Mammary epithelial cell (primary cell): ENCODE measurements at regions of chr20 and their contacts with region 1.

Region 1: DNA sequence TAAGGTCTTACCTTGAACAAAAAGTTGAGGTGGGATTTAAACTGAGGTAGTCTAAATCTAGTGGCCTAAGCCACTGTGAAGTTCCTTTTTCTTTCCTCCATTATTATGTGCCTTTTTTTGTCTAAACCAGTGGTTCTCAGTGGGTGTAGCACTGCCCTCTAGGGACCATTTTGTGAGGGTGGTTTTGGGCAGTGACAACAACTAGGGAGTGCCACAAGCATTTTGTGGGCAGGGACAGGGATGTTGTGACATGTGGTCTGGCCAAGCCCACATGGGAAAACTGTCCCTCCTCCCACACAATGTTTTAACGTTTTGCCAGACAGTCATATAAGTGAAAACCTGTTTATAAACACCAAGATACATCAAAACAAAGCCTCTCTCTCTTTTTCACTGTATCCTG is 899.4 kb upstream of the FLRT3 start:
- DNase-seq: peak; percentile 67
- H3K4me3 ChIP-seq: no peak overlapping the region
- H3K27ac ChIP-seq: no peak overlapping the region
- H3K4me1 ChIP-seq: peaks cover 12% of the 10 kb centered on the region
- H3K27me3 ChIP-seq: no peaks in the 10 kb centered on the region
- CTCF ChIP-seq: peak; percentile 76 to 78

Region 2: DNA sequence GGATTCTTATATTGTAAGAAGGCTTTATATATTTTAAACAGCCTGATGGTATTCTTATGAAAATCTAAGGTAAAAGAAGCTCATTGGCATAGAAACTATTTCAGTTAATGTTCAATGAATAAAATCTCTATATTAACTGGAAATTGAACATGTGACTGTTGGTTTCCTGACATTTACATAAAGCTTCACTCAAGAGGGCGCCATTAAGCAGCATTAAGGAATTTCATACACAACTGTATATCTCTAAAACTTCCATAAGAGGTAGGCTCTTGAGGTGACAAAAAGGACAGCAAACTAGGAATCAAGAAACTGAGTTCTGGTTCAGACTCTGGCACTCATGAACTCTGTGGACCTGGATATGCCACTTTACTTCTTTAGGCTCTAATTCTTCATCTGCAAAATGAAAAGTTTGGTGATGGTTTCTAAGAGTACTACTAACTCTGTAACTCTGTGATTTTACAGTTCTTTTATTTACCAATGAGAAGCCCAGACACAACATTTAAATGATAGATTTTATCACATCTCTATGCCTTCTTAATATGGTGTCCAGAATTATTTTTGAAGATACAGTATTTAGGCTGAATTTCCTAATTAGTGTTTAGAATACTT is 1046.9 kb before region 1 on chr20:
- CTCF ChIA-PET with region 1: no interaction called
- dilution Hi-C with region 1: no loop called
- in situ Hi-C with region 1: no loop called
- intact Hi-C with region 1: loop called (anchors 5 kb)
- DNase-seq: peak; percentile 44
- H3K4me3 ChIP-seq: no peak overlapping the region
- H3K27ac ChIP-seq: no peak overlapping the region
- H3K4me1 ChIP-seq: peaks cover 5% of the 10 kb centered on the region
- H3K27me3 ChIP-seq: no peaks in the 10 kb centered on the region
- CTCF ChIP-seq: peak; percentile 52 to 65

Region 3: DNA sequence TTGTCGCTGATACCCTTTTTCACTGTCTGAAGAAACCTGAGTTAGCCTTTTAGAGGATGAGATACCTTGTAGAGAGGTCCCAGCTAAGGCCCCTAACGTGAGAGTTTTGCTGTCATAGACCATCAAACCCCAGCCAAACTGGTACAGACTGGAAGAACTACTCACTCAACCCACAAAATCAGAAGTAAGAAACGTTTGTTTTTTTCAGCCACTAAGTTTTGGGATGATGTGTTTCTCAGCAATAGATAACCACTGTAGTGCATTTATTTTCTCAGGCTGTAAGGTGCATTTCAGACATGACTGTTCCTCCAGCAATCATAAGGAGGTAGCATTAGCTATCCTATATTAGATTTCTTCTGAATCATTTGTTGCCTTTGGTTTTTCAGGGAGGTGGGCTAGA is 492.1 kb before region 1 on chr20:
- CTCF ChIA-PET with region 1: no interaction called
- dilution Hi-C with region 1: no loop called
- in situ Hi-C with region 1: no loop called
- intact Hi-C with region 1: loop called (anchors 5 kb)
- DNase-seq: no peak
- H3K4me3 ChIP-seq: no peak overlapping the region
- H3K27ac ChIP-seq: no peak overlapping the region
- H3K4me1 ChIP-seq: no peaks in the 10 kb centered on the region
- H3K27me3 ChIP-seq: no peaks in the 10 kb centered on the region
- CTCF ChIP-seq: no peak

Region 4: DNA sequence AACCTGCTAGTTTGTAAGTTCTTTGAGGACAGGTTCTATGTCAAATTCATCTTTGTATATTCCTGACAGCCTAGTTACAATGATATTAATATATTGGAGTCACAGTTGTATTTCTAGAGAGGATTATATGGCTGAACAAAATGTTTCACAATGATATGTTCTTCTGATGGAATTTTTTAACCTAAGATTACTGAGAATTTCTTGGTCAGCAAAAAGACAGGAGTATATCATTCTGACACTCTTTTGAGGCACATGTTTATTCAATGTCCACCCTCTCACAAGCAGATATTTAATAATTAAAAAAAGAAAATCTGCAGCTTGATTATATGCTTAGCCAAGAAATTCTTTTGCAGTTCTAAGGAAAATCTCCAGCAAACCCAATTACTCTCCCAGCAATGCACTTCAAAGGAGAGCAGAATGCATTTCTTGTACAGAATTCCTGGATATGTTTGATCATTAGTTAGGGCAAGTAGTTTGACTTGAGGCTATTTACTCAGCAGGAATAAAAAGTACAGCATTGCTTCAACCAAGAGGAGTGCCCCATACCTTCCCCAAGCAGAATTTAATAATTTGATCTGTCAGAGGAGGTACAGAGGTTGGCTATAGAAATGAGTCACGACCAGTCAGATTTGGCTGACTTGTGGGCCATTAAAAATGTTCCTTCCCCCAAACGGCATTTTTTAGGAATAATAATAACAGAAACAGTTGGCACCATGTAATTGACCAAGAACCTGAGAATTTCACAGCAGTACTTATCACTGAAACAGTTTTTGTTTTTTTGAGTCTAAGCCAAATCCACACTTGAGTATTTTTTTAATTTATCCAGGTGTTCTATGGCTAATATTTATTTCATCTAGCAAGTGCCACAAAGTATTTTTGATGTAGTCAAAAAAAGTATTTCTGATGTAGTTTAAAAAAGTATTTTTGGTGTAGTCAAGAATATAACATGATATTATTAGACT is 391.3 kb before region 1 on chr20:
- CTCF ChIA-PET with region 1: no interaction called
- dilution Hi-C with region 1: no loop called
- in situ Hi-C with region 1: no loop called
- intact Hi-C with region 1: loop called (anchors 5 kb)
- DNase-seq: peak; percentile 94
- H3K4me3 ChIP-seq: no peak overlapping the region
- H3K27ac ChIP-seq: peak overlapping the region; percentile 61
- H3K4me1 ChIP-seq: peaks cover 18% of the 10 kb centered on the region
- H3K27me3 ChIP-seq: no peaks in the 10 kb centered on the region
- CTCF ChIP-seq: no peak

Region 5: GRCh38 chr20:14963262-14963663 is 273.5 kb before region 1 on chr20:
- CTCF ChIA-PET with region 1: interaction called, 11 read pairs
- dilution Hi-C with region 1: no loop called
- in situ Hi-C with region 1: no loop called
- intact Hi-C with region 1: loop called (anchors 2 kb)
- DNase-seq: peak; percentile 88
- H3K4me3 ChIP-seq: peak overlapping the region in 2 of 3 experiments; percentile 3 to 36
- H3K27ac ChIP-seq: peak overlapping the region; percentile 85
- H3K4me1 ChIP-seq: peaks cover 21% of the 10 kb centered on the region
- H3K27me3 ChIP-seq: no peaks in the 10 kb centered on the region
- CTCF ChIP-seq: no peak

Region 6: GRCh38 chr20:14986026-14986655 is 250.7 kb before region 1 on chr20:
- CTCF ChIA-PET with region 1: no interaction called
- dilution Hi-C with region 1: no loop called
- in situ Hi-C with region 1: loop called in 1 of 2 experiments (anchors 25 kb)
- intact Hi-C with region 1: no loop called
- DNase-seq: peak; percentile 32
- H3K4me3 ChIP-seq: no peak overlapping the region
- H3K27ac ChIP-seq: peak overlapping the region; percentile 18
- H3K4me1 ChIP-seq: peaks cover 15% of the 10 kb centered on the region
- H3K27me3 ChIP-seq: no peaks in the 10 kb centered on the region
- CTCF ChIP-seq: no peak

Region 7: DNA sequence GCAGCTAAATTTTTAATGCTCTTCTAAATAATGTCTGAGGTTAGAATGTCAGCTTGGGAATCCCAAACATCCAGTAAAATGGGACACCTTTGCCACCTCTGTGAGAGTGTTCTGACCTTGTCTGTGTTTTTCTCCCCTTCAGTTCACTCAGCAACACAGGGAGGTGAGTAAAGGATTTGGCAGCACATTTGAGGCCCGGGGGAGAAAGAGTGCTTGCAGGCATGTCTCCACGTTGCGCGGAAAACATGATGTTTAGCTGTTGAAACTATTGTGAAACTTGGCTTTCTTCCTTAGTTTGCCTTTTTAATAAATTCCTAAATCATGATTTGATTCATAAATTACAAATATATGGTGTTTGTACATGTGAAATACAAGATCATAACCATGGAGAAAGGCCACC is 191.6 kb before region 1 on chr20:
- CTCF ChIA-PET with region 1: no interaction called
- dilution Hi-C with region 1: no loop called
- in situ Hi-C with region 1: no loop called
- intact Hi-C with region 1: loop called (anchors 5 kb)
- DNase-seq: peak; percentile 65
- H3K4me3 ChIP-seq: no peak overlapping the region
- H3K27ac ChIP-seq: peak overlapping the region; percentile 59
- H3K4me1 ChIP-seq: peaks cover 13% of the 10 kb centered on the region
- H3K27me3 ChIP-seq: no peaks in the 10 kb centered on the region
- CTCF ChIP-seq: no peak

Region 8: DNA sequence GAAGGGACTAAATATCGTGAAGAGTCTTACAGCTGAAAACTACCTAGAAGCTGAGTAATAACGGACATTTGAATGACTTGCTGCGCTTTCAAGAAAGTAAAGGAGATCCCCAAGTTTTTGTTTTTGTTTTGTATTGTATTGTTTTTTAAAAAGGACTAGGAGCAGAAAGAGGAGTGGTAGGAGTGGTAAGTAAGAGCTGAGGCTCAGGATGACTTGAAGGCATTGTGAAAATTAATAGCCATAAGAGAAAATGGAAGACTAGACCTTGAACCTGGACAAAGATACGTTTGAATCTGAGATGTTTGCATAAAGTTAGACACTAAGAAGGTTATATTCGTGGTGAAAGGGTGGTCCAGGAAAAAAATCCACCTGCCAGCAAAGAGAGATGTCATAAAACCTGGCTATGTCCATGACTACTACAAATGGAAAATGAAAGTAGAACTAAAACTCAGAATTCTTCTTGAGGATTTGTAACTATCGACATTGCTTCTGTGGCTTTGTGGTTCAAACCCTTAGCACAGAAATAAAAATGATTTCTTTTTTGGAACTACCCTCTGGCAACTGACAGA is 74.6 kb before region 1 on chr20:
- CTCF ChIA-PET with region 1: no interaction called
- dilution Hi-C with region 1: no loop called
- in situ Hi-C with region 1: no loop called
- intact Hi-C with region 1: no loop called
- DNase-seq: no peak
- H3K4me3 ChIP-seq: peak overlapping the region in 1 of 3 experiments; percentile 22
- H3K27ac ChIP-seq: no peak overlapping the region
- H3K4me1 ChIP-seq: no peaks in the 10 kb centered on the region
- H3K27me3 ChIP-seq: no peaks in the 10 kb centered on the region
- CTCF ChIP-seq: no peak

Region 9: DNA sequence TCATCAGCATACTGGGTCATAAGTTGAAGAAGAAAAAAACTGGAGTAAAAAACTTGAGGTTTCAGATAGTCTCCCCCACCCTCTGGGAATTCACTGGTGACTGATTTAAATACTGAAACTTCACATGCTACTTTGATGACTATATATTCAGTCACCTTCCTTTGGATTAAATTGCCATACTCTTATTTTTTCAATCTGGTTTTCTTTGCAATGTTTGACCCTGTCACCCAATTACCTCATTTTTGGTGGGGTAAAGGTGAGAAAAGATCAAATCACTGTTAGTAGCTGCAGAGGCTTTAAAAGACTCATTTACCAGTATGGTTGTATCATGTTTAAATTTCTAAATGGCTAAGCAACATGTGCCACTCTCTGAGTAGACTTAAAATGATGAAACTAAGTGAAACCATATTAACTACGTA is 36.7 kb before region 1 on chr20:
- CTCF ChIA-PET with region 1: no interaction called
- dilution Hi-C with region 1: no loop called
- in situ Hi-C with region 1: no loop called
- intact Hi-C with region 1: no loop called
- DNase-seq: peak; percentile 56
- H3K4me3 ChIP-seq: no peak overlapping the region
- H3K27ac ChIP-seq: no peak overlapping the region
- H3K4me1 ChIP-seq: peaks cover 5% of the 10 kb centered on the region
- H3K27me3 ChIP-seq: no peaks in the 10 kb centered on the region
- CTCF ChIP-seq: no peak